Activated naive CD4-positive, alpha-beta T cell treated with anti-CD3 and anti-CD28 coated beads for 36 hours (primary cell): ENCODE measurements at regions of chr11 and their contacts with region 1.

Region 1: DNA sequence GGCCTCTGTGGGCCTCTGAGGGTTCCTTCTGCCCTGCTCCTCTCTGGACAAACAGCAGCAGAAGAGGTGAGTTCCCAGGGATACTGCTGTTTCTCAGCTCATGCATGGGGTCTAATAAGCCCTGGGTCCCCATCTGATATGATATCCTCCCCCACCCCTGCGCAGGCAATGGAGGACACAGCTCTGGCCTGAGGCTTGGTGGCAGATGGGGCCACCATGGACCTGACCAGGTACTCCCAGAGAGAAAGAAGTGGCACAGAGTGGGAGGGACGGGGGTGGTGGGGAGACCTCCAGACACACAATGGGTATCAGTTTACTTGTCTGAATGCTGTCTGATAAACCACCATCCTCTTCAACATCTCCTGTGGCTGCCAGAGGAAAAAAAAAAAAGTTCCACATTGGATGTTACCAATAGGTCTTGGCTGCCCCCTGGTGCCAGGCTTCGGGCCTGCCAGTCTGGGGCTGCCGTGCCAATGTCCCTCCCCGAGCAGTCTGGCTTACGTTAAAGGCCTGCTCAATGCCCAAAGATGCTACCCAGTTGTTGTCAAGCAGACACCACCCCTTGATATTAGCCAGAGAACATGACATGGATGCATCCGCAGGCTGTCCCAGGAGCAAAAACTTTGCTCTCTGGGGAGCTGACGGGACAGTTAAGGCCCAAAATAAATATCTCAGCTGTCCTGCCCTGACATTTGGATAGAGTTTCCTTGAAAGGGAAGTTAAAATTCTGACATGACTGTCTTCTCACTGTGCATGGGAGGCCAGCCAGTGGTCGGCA is 27.9 kb upstream of the ABCC8 start:
- DNase-seq: peak; percentile 85
- H3K4me3 Mint-ChIP-seq: no peak overlapping the region
- H3K27ac Mint-ChIP-seq: no peak overlapping the region
- H3K4me1 Mint-ChIP-seq: no peaks in the 10 kb centered on the region
- H3K27me3 Mint-ChIP-seq: peaks cover 4% of the 10 kb centered on the region

Region 2: DNA sequence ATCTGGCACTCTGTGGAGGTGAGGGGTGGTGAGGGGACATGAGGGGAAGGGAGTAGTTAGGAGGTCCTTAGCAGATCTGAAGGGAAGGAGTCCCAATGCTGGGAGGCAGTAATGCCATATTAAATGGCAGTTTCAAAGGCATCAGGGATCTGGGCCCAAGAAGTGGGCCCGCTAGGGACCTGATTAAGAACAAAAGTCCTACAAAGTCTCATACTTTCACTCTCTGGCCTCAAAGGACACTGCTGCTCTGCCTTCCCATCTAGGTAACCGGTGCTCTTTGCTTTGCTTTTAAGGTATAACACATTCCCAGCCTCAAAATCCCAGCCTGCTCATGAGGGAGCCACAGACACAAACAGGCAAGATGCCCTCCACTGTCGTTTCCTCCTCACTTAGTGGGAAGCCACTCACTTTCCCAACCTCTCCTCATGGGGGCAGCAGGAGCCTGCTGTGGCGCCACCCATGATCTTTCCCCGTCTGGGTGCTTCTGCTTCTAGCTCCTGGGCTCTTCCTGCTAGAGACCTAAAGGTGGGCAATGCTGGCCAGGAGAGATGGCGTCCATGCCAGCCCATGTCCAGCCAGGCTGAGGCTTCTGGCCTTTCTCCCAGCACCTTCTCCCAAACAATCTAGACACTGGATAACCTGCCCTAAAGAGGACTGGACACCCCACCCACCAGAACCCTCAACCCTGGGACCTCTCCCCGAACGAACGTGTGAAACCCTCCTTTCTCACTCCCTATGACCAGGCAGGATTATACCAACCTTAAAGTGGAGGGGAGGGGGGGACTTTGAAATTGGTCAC is 558.6 kb before region 1 on chr11:
- CTCF ChIA-PET with region 1: no interaction called
- intact Hi-C with region 1: loop called (anchors 5 kb)
- DNase-seq: peak; percentile 70
- H3K4me3 Mint-ChIP-seq: no peak overlapping the region
- H3K27ac Mint-ChIP-seq: no peak overlapping the region
- H3K4me1 Mint-ChIP-seq: peaks cover 3% of the 10 kb centered on the region
- H3K27me3 Mint-ChIP-seq: no peaks in the 10 kb centered on the region

Region 3: DNA sequence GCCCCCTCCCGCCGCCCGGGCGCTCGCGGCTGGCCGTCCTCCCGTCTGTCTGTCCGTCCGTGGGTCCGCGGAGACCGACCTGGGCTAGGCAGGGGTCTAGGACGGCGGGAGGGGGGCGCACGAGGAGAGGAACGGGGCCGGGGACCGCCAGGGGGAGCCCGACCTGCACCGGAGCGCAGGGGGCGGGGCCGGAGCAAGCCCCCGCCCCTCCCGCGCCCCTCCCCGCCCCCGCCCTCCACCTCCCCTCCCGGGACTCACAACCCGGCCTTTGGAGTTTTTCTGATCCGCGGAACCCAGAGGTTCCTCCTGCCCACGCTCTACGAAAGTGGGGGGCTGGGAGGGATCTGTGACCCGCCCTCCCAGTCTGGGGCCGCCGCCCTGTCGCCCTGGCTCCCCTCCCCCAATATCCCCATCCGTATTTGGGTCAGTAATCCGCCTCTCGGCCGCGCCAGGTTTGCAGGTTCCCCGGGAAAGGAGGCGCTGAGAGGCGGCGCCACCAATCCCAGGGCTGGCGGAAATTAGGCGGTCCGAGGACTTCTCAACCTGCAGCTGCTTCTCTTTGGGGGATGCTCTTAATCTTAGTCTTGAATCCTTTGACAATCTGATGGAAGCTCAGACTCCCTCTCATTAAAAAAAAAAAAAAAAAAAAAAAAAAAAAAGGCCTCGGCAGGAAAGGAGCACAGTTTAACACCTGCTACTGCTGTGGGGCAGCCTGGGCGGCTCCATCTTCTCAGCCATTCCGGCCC is 115.1 kb before region 1 on chr11:
- CTCF ChIA-PET with region 1: interaction called, 92 read pairs
- intact Hi-C with region 1: loop called (anchors 1 kb)
- DNase-seq: peak; percentile 75
- H3K4me3 Mint-ChIP-seq: peak overlapping the region; percentile 71
- H3K27ac Mint-ChIP-seq: no peak overlapping the region
- H3K4me1 Mint-ChIP-seq: peaks cover 5% of the 10 kb centered on the region
- H3K27me3 Mint-ChIP-seq: no peaks in the 10 kb centered on the region